Activated CD4-positive, alpha-beta T cell treated with anti-CD3 and anti-CD28 coated beads, Interleukin-2, amount 10 ng/mL, durations not matched to agents 24 days and 14 days (primary cell): ENCODE measurements at regions of chr11 and their contacts with region 1.

Region 1: GRCh38 chr11:11841723-11842420 is at the start of gene USP47:
- DNase-seq: peak; percentile 98
- H3K4me3 Mint-ChIP-seq: no peak within 1 kb of the TSS
- H3K27ac Mint-ChIP-seq: no peak within 1 kb of the TSS
- H3K4me1 Mint-ChIP-seq: peaks cover 27% of the 10 kb centered on the region
- H3K27me3 Mint-ChIP-seq: peaks cover 17% of the 10 kb centered on the region
- total RNA-seq, gene USP47: 51.9 and 54.0 TPM in 2 replicates

Region 2: GRCh38 chr11:10808553-10809372 is 1033.1 kb before region 1 on chr11 and contains the start of gene EIF4G2:
- intact Hi-C with region 1: loop called (anchors 2 kb)
- DNase-seq: peak; percentile 99
- H3K4me3 Mint-ChIP-seq: peak within 1 kb of the TSS; percentile 95
- H3K27ac Mint-ChIP-seq: peak within 1 kb of the TSS; percentile 98
- H3K4me1 Mint-ChIP-seq: peaks cover 31% of the 10 kb centered on the region
- H3K27me3 Mint-ChIP-seq: no peaks in the 10 kb centered on the region
- total RNA-seq, gene EIF4G2: 1,071 and 1,120 TPM in 2 replicates

Region 3: GRCh38 chr11:10857709-10858438 is 984.0 kb before region 1 on chr11 and contains the start of gene ZBED5:
- intact Hi-C with region 1: loop called (anchors 5 kb)
- DNase-seq: peak; percentile 99
- H3K4me3 Mint-ChIP-seq: peak within 1 kb of the TSS; percentile 100
- H3K27ac Mint-ChIP-seq: peak within 1 kb of the TSS; percentile 100
- H3K4me1 Mint-ChIP-seq: peaks cover 35% of the 10 kb centered on the region
- H3K27me3 Mint-ChIP-seq: no peaks in the 10 kb centered on the region
- total RNA-seq, gene ZBED5: 41.8 and 43.1 TPM in 2 replicates

Region 4: GRCh38 chr11:11621573-11622319 is 220.1 kb before region 1 on chr11 and contains the start of gene GALNT18:
- intact Hi-C with region 1: loop called (anchors 10 kb)
- DNase-seq: peak; percentile 95
- H3K4me3 Mint-ChIP-seq: peak within 1 kb of the TSS; percentile 88
- H3K27ac Mint-ChIP-seq: peak within 1 kb of the TSS; percentile 76
- H3K4me1 Mint-ChIP-seq: peaks cover 9% of the 10 kb centered on the region
- H3K27me3 Mint-ChIP-seq: peaks cover 56% of the 10 kb centered on the region
- total RNA-seq, gene GALNT18: 8.6 and 9.3 TPM in 2 replicates

Region 5: GRCh38 chr11:11856638-11857037 is 14.8 kb after region 1 on chr11:
- intact Hi-C with region 1: loop called (anchors 1 kb)
- DNase-seq: peak; percentile 71
- H3K4me3 Mint-ChIP-seq: no peak overlapping the region
- H3K27ac Mint-ChIP-seq: no peak overlapping the region
- H3K4me1 Mint-ChIP-seq: peaks cover 36% of the 10 kb centered on the region
- H3K27me3 Mint-ChIP-seq: no peaks in the 10 kb centered on the region

Region 6: DNA sequence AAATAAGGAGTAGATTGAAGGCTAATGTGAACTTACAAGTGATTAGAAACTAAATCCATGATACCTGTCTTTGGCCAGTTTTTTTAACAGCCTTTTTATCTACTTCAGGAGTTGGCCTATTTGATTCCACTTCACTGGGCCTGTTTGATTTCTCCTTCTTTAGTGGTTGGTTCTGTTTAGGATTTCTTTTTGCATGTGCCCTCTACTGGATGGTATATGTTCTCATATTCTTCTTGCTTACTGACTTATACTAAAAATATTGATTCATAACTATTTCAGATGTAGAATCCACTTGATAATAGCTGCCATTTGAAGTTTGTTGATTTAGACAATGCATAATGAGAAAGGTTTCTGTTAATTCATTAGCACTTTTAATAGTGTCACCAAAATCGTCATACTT is 53.8 kb after region 1 on chr11:
- intact Hi-C with region 1: loop called (anchors 5 kb)
- DNase-seq: no peak
- H3K4me3 Mint-ChIP-seq: no peak overlapping the region
- H3K27ac Mint-ChIP-seq: no peak overlapping the region
- H3K4me1 Mint-ChIP-seq: peaks cover 10% of the 10 kb centered on the region
- H3K27me3 Mint-ChIP-seq: no peaks in the 10 kb centered on the region

Region 7: GRCh38 chr11:12090061-12090591 is 248.3 kb after region 1 on chr11:
- intact Hi-C with region 1: no loop called
- DNase-seq: peak; percentile 73
- H3K4me3 Mint-ChIP-seq: peak overlapping the region; percentile 54
- H3K27ac Mint-ChIP-seq: peak overlapping the region; percentile 82
- H3K4me1 Mint-ChIP-seq: peaks cover 62% of the 10 kb centered on the region
- H3K27me3 Mint-ChIP-seq: no peaks in the 10 kb centered on the region

Region 8: GRCh38 chr11:12195768-12196167 is 353.9 kb after region 1 on chr11:
- intact Hi-C with region 1: loop called (anchors 5 kb)
- DNase-seq: peak; percentile 90
- H3K4me3 Mint-ChIP-seq: peak overlapping the region; percentile 94
- H3K27ac Mint-ChIP-seq: peak overlapping the region; percentile 96
- H3K4me1 Mint-ChIP-seq: peaks cover 70% of the 10 kb centered on the region
- H3K27me3 Mint-ChIP-seq: no peaks in the 10 kb centered on the region

Region 9: DNA sequence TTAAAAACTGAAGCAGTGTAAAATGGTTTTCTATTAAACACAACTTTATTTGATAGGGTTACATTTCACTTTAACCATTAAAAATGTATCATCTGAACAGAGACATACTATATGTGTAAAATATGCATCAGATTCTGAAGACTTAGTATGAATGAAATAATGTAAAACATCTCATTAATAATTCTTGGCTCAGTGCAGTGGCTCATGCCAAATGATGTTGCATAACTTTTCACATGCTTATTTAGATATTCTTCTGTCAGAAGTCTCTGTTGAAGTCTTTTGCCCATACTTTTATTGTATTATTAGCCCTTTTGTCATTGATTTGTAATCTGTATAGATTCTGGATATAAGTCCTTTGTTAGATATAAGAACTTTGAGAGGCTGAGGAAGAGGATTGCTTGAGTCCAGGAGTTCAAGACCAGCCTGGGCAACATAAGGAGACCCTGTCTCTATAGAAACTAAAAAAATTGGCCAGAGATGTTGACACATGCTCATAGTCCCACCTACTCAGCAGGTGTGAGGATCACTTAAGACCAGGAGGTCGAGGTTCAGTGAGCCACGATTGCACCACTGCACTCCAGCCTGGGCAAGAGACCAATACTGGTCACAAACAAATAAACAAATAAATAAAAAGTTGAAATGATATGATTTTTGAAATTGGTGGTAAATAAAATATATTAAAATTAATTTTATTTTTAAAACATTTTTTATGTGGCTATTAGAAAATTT is 461.7 kb after region 1 on chr11:
- intact Hi-C with region 1: no loop called
- DNase-seq: peak; percentile 6
- H3K4me3 Mint-ChIP-seq: no peak overlapping the region
- H3K27ac Mint-ChIP-seq: no peak overlapping the region
- H3K4me1 Mint-ChIP-seq: no peaks in the 10 kb centered on the region
- H3K27me3 Mint-ChIP-seq: peaks cover 3% of the 10 kb centered on the region